Activated CD8-positive, alpha-beta T cell treated with anti-CD3 and anti-CD28 coated beads, Interleukin-2, amount 10 ng/mL, durations not matched to agents 7 days and 5 days (primary cell): ENCODE measurements at regions of chr11 and their contacts with region 1.

Region 1: DNA sequence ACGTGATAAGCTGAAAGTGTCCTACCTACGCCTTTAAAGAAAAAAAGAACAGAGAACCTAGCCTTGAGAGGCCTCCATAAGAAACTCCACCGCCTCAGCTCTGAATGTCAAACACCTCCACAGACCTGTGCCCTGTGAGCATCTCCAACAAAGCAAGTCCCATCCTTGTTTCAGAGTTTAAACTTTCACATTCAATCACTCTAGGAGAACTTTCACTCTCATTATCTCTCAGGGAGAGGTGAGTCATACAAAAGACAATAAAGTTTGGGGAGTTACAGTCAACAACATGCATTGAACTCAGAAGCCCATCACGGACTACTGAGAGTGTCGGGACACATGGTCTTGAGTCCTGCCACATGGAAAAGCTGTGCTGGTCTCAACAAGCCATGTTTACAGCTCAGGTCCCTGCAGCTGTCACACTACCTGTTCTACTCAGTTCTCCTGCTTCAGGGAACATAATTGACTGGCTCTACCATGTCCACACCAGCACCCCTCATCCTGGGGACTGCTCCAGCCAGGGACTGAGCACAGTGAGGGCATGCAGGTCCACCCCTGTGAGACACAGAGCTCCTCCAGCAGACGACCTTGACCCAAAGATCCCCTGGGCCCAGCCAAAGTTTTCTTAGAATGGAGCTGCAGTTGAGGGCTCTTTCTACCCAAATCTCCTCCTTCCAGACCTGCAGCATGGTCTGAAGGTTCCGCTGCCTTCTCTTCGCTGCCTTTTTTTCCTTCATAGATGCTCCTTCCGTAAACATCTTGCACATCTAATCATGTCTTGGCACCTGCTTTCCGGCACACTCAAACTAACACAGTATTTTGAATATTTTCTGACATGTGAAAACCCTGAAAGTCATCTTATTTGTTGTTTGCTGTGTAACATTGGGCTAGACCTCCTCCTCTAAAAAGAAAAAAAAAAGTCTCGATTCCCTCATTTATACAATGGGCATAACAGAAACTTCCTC is 114.9 kb downstream of the ETS1 start:
- DNase-seq: peak; percentile 69
- ATAC-seq: peak; percentile 55
- H3K4me3 Mint-ChIP-seq: peak overlapping the region; percentile 56
- H3K27ac Mint-ChIP-seq: peak overlapping the region; percentile 85
- H3K4me1 Mint-ChIP-seq: peaks cover 98% of the 10 kb centered on the region
- H3K27me3 Mint-ChIP-seq: no peaks in the 10 kb centered on the region

Region 2: DNA sequence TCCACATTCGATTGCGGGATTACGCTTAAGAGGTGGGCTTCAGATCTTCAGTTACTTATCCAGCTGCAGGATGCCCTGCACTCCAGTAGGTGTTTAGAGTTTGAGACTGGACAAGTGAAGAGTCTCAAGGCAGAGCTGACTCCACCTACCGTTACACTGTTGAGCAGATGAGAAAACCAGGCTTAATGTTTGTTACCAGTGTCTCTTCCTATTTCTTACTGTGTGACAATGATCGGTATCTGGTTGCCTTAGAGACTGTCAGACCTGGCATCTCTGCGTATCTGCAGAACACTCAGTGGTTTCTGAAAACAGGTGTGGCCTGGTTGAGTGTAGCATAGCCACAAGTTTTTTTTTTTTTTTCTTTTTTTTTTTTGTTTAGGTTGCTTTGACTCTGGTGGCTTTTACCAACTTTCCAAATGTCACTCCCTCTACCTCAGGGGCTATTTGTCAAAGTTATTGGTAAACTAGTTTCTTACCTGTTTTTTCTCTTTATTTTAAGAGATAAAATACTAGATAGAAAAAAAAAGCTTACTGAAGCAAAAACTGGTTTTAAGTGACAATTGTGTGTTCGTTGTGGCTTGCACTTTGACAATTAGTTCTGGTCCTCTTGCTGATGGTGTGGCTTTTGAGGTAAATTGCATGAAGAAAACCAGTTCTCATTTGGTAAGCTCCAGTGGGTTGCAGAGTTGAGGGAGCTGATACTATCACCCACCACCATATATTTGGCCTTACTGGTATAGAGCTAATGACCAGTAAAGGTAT is 169.8 kb before region 1 on chr11:
- CTCF ChIA-PET with region 1: interaction called, 30 read pairs
- POLR2A ChIA-PET with region 1: interaction called, 57 read pairs
- DNase-seq: peak; percentile 90
- ATAC-seq: peak; percentile 90
- H3K4me3 Mint-ChIP-seq: peak overlapping the region; percentile 89
- H3K27ac Mint-ChIP-seq: peak overlapping the region; percentile 96
- H3K4me1 Mint-ChIP-seq: peaks cover 79% of the 10 kb centered on the region
- H3K27me3 Mint-ChIP-seq: no peaks in the 10 kb centered on the region

Region 3: DNA sequence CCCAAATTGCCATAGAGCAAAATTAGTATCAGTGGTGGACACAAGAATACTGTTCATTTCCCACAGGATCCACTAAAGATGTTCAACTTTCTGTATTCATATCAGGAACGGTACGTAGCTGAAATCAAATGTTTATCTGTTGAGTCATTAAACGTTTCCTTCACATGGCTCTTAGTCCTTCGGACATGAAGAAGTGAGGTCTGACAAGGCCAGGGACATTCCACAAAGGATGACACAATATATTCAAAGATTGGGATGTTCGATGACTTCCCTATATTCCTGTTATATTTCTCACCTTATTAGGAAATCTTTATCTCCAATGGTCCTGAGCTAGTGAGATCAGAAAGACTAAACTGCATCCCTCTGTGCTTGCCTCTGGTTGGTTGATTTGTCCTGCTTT is 14.1 kb before region 1 on chr11:
- CTCF ChIA-PET with region 1: interaction called, 13 read pairs
- POLR2A ChIA-PET with region 1: interaction called, 5 read pairs
- DNase-seq: no peak
- ATAC-seq: no peak
- H3K4me3 Mint-ChIP-seq: no peak overlapping the region
- H3K27ac Mint-ChIP-seq: peak overlapping the region; percentile 2
- H3K4me1 Mint-ChIP-seq: peaks cover 60% of the 10 kb centered on the region
- H3K27me3 Mint-ChIP-seq: no peaks in the 10 kb centered on the region

Region 4: DNA sequence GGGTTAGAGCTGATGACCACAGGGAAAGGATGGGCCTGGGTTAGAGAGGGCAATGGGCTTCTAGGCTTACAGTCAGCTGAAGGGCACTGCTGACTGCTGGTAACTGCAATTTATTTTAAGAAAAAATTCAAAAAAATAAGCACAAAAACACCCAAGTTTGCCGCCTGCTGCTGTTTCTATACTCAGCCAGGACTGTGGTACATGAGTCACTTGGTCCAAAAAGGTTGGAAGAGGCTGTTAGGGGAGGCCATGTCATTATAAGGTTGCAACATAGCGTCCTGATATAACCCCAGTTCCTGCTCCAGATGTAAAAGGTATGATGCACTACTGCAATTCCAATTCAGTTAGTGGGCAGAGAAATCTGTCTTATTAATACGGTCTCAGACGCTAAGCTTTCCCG is 16.1 kb after region 1 on chr11:
- CTCF ChIA-PET with region 1: interaction called, 12 read pairs
- POLR2A ChIA-PET with region 1: interaction called, 175 read pairs
- DNase-seq: no peak
- ATAC-seq: peak; percentile 18
- H3K4me3 Mint-ChIP-seq: peak overlapping the region; percentile 26
- H3K27ac Mint-ChIP-seq: peak overlapping the region; percentile 87
- H3K4me1 Mint-ChIP-seq: peaks cover 95% of the 10 kb centered on the region
- H3K27me3 Mint-ChIP-seq: no peaks in the 10 kb centered on the region

Region 5: DNA sequence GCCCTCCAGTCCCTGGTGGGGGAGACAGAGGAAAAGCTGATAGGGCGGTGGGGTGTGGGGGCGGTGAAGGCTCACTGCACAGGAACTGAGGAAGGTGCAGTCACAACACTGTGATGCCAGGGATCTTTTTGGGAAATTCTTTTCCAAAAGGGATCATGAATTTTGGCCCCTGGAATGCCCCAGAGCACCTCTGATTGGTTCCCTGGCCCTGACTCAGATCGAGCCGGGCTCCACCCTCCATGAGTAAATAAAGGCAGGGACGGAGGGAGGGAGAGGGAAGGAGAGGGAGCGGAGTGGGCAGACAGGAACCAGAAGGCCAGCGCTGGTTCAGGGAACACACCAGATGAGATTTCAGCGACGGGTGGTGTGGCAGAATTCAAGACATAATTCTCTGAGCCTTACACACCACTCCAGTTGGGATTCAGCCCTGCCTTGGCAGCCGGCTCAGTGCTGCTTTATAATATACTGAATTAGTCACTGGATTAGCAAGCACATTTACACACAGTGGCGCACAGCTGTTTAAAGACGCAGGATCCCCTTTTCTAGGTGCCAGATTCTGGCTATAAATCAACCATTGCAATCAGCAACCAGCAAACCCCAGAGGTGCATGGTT is 34.7 kb after region 1 on chr11:
- CTCF ChIA-PET with region 1: interaction called, 6 read pairs
- POLR2A ChIA-PET with region 1: interaction called, 230 read pairs
- DNase-seq: no peak
- ATAC-seq: peak; percentile 7
- H3K4me3 Mint-ChIP-seq: peak overlapping the region; percentile 78
- H3K27ac Mint-ChIP-seq: peak overlapping the region; percentile 96
- H3K4me1 Mint-ChIP-seq: peaks cover 97% of the 10 kb centered on the region
- H3K27me3 Mint-ChIP-seq: no peaks in the 10 kb centered on the region